ENCODE measurements at regions of chr17 and their contacts with region 1.

Region 1: DNA sequence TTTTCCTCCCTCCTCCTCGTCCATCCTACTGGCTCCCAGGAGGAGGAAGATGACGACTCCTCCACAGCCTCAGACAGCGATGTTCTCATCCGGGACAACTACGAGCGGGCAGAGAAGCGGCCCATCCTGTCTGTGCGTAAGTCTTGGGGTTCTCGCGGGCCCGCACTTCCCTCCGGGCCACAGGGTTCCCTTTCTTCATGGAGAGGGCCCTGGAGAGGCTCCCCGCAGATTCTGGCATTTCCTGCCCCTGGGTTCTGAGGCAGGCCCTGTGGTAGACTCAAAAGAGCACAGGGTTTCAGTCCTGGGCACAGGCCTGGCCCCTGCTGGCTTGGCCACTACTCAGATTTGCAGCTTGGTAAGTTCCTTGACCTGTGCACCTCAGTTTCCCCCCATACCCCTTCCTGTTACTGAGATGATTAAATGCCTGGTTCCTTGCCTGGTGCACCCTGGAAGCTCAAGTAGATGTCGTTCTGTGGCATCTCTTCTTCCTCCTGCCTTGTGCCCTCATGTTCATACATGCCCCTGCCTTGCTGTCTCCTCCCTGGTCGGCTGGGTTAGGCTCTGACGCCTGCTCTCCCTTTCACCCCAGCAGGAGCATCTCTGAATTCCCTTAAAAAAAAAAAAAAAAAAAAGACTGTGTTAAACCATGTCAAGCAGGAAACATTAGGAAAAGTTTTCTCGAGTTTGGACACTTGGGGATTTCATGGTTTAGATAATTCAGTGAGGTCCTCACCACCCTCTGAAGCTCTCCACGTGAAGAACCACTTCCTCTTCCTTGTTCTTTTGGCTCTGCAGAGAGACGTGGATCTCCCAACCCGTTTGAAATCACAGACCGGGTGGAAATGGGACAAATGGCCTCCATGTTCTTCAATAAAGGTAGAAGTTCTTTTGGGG is 14.3 kb upstream of the NAT9 start:
- DNase-seq: no peak
- ATAC-seq: no peak
- H3K4me3 ChIP-seq: no peak overlapping the region
- H3K27ac ChIP-seq: no peak overlapping the region
- H3K4me1 ChIP-seq: peaks cover 1% of the 10 kb centered on the region
- H3K27me3 ChIP-seq: no peaks in the 10 kb centered on the region
- CTCF ChIP-seq: no peak
- EP300 ChIP-seq: no peak
- POLR2A ChIP-seq: no peak
- RAD21 ChIP-seq: no peak

Region 2: GRCh38 chr17:74677558-74678466 is 112.6 kb before region 1 on chr17:
- CTCF ChIA-PET with region 1: no interaction called
- POLR2A ChIA-PET with region 1: no interaction called
- RAD21 ChIA-PET with region 1: no interaction called
- SMC1A ChIA-PET with region 1: no interaction called
- in situ Hi-C with region 1: no loop called
- intact Hi-C with region 1: no loop called
- DNase-seq: no peak
- ATAC-seq: no peak
- H3K4me3 ChIP-seq: no peak overlapping the region
- H3K27ac ChIP-seq: no peak overlapping the region
- H3K4me1 ChIP-seq: 0 out of 2 replicates have a peak, but pooled peaks cover 3% of the 10 kb centered on the region
- H3K27me3 ChIP-seq: peaks cover 0 to 4% of the 10 kb centered on the region in 2 experiments; a peak in 2 of 4 replicates
- CTCF ChIP-seq: no peak
- EP300 ChIP-seq: no peak
- POLR2A ChIP-seq: no peak
- RAD21 ChIP-seq: no peak

Region 3: GRCh38 chr17:74776044-74776977 is 14.1 kb before region 1 on chr17 and contains the start of gene NAT9:
- CTCF ChIA-PET with region 1: interaction called, 17 read pairs
- POLR2A ChIA-PET with region 1: interaction called, 3 read pairs
- RAD21 ChIA-PET with region 1: interaction called, 4 read pairs
- SMC1A ChIA-PET with region 1: no interaction called
- in situ Hi-C with region 1: no loop called
- intact Hi-C with region 1: no loop called
- DNase-seq: peak; percentile 82
- ATAC-seq: peak; percentile 91
- H3K4me3 ChIP-seq: peak within 1 kb of the TSS; percentile 73
- H3K27ac ChIP-seq: peak within 1 kb of the TSS; percentile 59
- H3K4me1 ChIP-seq: peaks cover 28% of the 10 kb centered on the region
- H3K27me3 ChIP-seq: no peaks in the 10 kb centered on the region
- CTCF ChIP-seq: no peak
- EP300 ChIP-seq: no peak
- POLR2A ChIP-seq: peak; percentile 89
- RAD21 ChIP-seq: no peak
- polyA plus RNA-seq, gene NAT9: 3.5 to 4.5 TPM

Region 4: GRCh38 chr17:74859459-74860228 is 69.2 kb after region 1 on chr17 and contains the start of gene GRIN2C:
- CTCF ChIA-PET with region 1: interaction called, 90 read pairs
- POLR2A ChIA-PET with region 1: interaction called, 6 read pairs
- RAD21 ChIA-PET with region 1: interaction called, 15 read pairs
- SMC1A ChIA-PET with region 1: interaction called, 12 read pairs
- in situ Hi-C with region 1: loop called (anchors 5 kb)
- intact Hi-C with region 1: no loop called
- DNase-seq: no peak
- ATAC-seq: peak; percentile 31; the same call in 2 of the 3 replicates
- H3K4me3 ChIP-seq: no peak within 1 kb of the TSS
- H3K27ac ChIP-seq: no peak within 1 kb of the TSS
- H3K4me1 ChIP-seq: no peaks in the 10 kb centered on the region
- H3K27me3 ChIP-seq: peaks cover 12 to 14% of the 10 kb centered on the region in 2 experiments
- CTCF ChIP-seq: peak in 1 of 3 experiments; percentile 13; a peak in 1 of 6 replicates
- EP300 ChIP-seq: no peak
- POLR2A ChIP-seq: no peak
- RAD21 ChIP-seq: no peak
- polyA plus RNA-seq, gene GRIN2C: not detected

Region 5: DNA sequence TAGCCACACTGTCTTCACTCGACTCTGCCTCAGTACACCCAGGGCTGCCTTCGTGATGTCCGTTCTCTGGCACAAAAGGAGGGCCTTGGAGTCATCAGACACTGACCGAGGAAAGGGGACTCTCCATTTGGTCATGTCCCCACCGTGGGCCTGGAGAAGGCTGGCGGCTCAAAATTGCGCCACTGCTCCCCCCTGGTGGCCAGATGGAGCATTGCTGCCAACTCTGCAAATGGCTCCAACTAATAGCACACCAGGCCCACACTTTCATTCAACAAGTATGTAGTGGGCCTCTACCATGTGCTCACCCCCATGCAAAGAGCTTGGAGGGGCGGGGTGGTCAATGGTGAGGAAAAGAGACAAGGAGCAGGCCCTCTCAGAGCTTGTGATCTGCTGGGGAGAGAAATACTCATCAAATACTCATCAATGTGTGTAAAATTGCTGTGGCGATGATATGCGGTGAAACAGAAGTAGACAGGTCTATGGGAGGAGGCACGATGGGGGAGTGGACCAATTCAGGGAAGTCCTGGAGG is 74.5 kb after region 1 on chr17:
- CTCF ChIA-PET with region 1: interaction called, 90 read pairs
- POLR2A ChIA-PET with region 1: interaction called, 4 read pairs
- RAD21 ChIA-PET with region 1: interaction called, 15 read pairs
- SMC1A ChIA-PET with region 1: interaction called, 12 read pairs
- in situ Hi-C with region 1: no loop called
- intact Hi-C with region 1: loop called (anchors 1 kb)
- DNase-seq: no peak
- ATAC-seq: peak; percentile 81
- H3K4me3 ChIP-seq: no peak overlapping the region
- H3K27ac ChIP-seq: no peak overlapping the region
- H3K4me1 ChIP-seq: peaks cover 4% of the 10 kb centered on the region; the same call in 1 of the 2 replicates
- H3K27me3 ChIP-seq: peaks cover 5 to 8% of the 10 kb centered on the region in 2 experiments
- CTCF ChIP-seq: peak; percentile 91 to 98 (median 97)
- EP300 ChIP-seq: no peak
- POLR2A ChIP-seq: no peak
- RAD21 ChIP-seq: peak; percentile 71